ENCODE measurements at regions of chr2 and their contacts with region 1.

Region 1: GRCh38 chr2:135916207-135916606 is 40.0 kb upstream of the MCM6 start:
- DNase-seq: no peak
- H3K4me3 ChIP-seq: no peak overlapping the region
- H3K27ac ChIP-seq: no peak overlapping the region
- H3K4me1 ChIP-seq: no peaks in the 10 kb centered on the region
- H3K27me3 ChIP-seq: no peaks in the 10 kb centered on the region
- CTCF ChIP-seq: peak in 4 of 6 experiments; percentile 43 to 65 (median 56)
- POLR2A ChIP-seq: no peak

Region 2: DNA sequence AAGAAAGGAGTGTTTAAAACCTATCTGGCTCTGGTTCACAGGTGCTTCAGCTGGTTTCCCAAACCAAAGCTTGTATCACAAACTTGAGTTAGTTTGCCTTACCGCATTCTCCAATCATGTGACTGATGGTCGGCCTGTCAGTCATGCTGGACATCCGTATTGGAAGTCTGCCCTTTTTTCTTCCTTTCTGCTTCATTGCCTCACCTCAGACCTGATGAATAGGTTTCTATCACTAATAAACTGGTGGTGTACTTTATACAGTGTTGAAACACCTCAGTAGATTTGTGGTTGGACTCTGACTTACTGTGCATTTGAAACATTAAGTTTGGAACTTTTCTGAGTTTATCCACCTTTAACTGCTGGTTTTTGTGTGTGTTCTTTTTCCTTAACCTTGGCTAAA is 300.8 kb before region 1 on chr2:
- intact Hi-C with region 1: no loop called
- DNase-seq: peak in 1 of 2 donors; percentile 23
- H3K4me3 ChIP-seq: no peak overlapping the region
- H3K27ac ChIP-seq: peak overlapping the region in 1 of 3 donors; percentile 15
- H3K4me1 ChIP-seq: peaks cover 7 to 11% of the 10 kb centered on the region in 2 donors
- H3K27me3 ChIP-seq: no peaks in the 10 kb centered on the region
- CTCF ChIP-seq: no peak
- POLR2A ChIP-seq: no peak

Region 3: DNA sequence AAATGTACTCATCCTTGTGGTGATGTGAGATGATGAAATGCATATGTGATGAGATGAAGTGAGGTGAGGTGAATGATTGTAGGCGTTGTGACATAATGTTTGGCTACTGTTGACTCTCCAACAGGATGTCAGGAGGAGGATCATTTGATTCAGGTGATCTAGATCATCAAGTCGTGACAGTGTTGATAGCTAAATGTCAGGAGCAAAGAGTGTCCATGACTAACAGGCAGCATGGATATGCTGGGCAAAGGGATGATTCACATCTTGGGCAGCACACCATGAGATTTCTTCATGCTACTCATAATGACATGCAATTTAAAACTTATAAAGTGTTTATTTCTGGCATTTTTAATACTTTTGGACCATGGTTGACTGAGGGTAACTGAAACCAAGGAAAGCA is 214.8 kb before region 1 on chr2:
- intact Hi-C with region 1: no loop called
- DNase-seq: no peak
- H3K4me3 ChIP-seq: no peak overlapping the region
- H3K27ac ChIP-seq: no peak overlapping the region
- H3K4me1 ChIP-seq: no peaks in the 10 kb centered on the region
- H3K27me3 ChIP-seq: no peaks in the 10 kb centered on the region
- CTCF ChIP-seq: no peak
- POLR2A ChIP-seq: no peak

Region 4: GRCh38 chr2:136384531-136385303 is 468.5 kb after region 1 on chr2:
- intact Hi-C with region 1: loop called (anchors 5 kb)
- DNase-seq: peak; percentile 23 to 33
- H3K4me3 ChIP-seq: no peak overlapping the region
- H3K27ac ChIP-seq: no peak overlapping the region
- H3K4me1 ChIP-seq: no peaks in the 10 kb centered on the region
- H3K27me3 ChIP-seq: no peaks in the 10 kb centered on the region
- CTCF ChIP-seq: peak; percentile 10 to 73 (median 52)
- POLR2A ChIP-seq: no peak